H1 (cell line): ENCODE measurements at regions of chr12 and their contacts with region 1.

Region 1: DNA sequence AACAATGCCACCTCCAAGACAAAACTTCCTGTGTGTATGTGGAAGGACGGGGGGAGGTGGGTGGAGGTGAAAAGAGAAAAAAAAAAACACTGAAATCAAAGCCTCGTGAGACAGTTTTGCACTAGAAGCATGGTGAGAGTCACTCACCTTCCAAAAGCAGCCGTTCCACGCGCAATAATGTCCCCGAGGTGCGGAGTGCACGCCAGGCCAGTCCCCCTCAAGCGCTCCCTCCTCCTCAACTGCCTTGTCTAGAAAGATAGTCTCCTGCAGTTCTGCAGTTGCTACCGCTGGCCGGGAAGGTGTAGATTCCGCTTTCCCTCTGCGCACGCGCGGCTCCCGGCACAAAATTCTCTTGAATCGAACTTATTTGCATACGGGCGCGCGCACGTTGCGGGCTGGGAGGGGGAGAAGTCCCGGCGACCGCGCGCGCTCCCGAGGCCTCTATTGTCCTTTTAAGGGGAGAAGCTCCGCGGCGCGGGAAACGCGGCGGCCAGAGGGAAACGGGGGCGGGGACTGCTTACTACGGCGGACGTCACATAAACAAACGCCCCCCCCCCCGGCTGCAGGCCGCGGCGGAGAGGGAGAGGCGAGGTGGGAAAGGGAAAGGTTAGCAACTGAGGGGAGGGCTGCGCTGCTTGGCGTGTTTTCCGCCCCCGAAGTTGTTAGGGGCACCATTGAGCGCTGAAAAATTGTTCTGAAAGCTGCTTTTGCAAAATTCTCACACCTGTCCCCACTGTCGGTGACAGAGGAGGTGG is at the start of gene SINHCAF:
- DNase-seq: peak; percentile 99
- H3K4me3 ChIP-seq: peak within 1 kb of the TSS; percentile 95 to 99 (median 99)
- H3K27ac ChIP-seq: peak within 1 kb of the TSS; percentile 94
- H3K4me1 ChIP-seq: peaks cover 1 to 12% (median 3%) of the 10 kb centered on the region in 4 experiments; a peak in 5 of 7 replicates
- H3K27me3 ChIP-seq: no peaks in the 10 kb centered on the region
- CTCF ChIP-seq: no peak
- EP300 ChIP-seq: peak in 1 of 2 experiments; percentile 24; a peak in 1 of 3 replicates
- POLR2A ChIP-seq: peak; percentile 96 to 99
- RAD21 ChIP-seq: no peak
- total RNA-seq, gene SINHCAF: 536 and 576 TPM in 2 replicates

Region 2: DNA sequence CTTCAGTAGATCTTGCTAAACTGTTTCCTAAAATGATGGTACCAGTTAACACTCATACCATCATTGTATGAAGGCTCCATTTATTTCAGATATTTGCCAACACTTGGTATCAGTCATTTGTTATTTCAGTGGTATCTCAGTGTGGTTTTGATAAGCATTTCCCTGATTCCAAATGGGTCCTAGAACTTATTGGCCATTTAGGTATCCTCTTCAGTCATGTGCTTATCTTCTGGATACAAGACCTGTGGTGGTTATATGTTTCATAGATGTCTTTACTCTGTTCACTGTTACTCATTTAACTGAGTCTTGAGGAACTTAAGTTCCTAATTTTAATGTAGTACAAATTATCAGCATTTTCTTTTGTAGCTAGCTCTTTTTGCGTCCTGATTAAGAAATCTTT is 13.6 kb before region 1 on chr12:
- CTCF ChIA-PET with region 1: no interaction called
- POLR2A ChIA-PET with region 1: interaction called, 22 read pairs
- DNase-seq: no peak
- H3K4me3 ChIP-seq: no peak overlapping the region
- H3K27ac ChIP-seq: no peak overlapping the region
- H3K4me1 ChIP-seq: peaks cover 4 to 16% (median 9%) of the 10 kb centered on the region in 4 experiments
- H3K27me3 ChIP-seq: no peaks in the 10 kb centered on the region
- CTCF ChIP-seq: no peak
- EP300 ChIP-seq: no peak
- POLR2A ChIP-seq: no peak
- RAD21 ChIP-seq: no peak

Region 3: DNA sequence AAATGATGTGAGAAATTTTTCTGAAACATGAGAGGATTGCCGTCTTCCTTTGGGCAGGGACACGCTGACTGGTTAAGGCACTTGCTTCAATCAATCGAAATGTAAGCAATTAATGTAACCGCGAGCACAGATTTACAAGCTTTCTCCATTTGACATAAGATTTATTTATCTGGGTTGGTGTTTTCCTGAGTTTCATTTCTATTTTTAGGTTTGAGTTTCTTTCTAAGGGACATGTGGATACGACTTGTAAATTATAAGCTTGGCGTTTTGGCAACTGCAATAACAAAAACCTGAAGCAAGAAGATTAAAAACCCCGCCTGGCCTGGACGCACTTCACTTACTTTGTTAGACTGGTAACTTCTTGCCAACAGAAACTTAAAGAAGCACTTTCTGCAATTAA is 20.2 kb after region 1 on chr12:
- CTCF ChIA-PET with region 1: interaction called, 4 read pairs
- POLR2A ChIA-PET with region 1: interaction called, 22 read pairs
- DNase-seq: no peak
- H3K4me3 ChIP-seq: no peak overlapping the region
- H3K27ac ChIP-seq: no peak overlapping the region
- H3K4me1 ChIP-seq: peaks cover 0 to 9% (median 2%) of the 10 kb centered on the region in 4 experiments; a peak in 4 of 7 replicates
- H3K27me3 ChIP-seq: no peaks in the 10 kb centered on the region
- CTCF ChIP-seq: no peak
- EP300 ChIP-seq: no peak
- POLR2A ChIP-seq: no peak
- RAD21 ChIP-seq: no peak

Region 4: DNA sequence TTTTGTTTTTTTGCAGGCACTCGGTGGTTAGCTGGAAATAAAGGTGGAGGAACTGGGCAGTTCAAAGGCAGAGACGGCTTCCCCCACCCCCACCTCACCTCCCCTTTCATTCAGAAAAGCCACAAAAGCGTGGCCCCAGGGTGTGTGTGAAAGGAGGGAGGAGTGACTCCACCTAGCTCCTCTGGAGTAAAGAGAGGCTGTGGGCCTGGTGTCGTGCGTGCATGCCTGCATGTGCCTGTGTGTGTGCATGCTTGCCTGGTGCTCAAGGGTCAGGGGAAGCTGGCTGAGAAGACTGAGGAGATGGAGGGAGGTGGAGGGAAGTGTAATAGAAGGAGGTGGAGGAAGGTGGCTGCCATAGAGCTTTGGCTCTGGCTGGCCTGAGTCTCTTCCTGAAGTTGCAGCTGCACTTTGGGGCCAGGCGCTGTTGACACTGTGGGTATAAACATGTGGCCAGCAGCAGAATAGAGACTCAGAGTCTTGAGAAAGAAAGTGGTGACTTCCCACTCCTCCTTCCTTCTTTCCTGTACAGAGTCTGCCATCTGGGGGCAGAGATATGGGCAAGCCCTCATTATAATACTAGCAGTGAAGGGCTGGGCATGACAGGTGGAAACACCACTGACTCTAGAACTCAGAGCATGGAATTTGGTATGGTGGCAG is 36.8 kb after region 1 on chr12:
- CTCF ChIA-PET with region 1: interaction called, 4 read pairs
- POLR2A ChIA-PET with region 1: interaction called, 66 read pairs
- DNase-seq: peak in 1 of 2 experiments; percentile 58
- H3K4me3 ChIP-seq: peak overlapping the region in 1 of 4 experiments; percentile 33; a peak in 2 of 8 replicates
- H3K27ac ChIP-seq: peak overlapping the region; percentile 85
- H3K4me1 ChIP-seq: peaks cover 13 to 21% (median 21%) of the 10 kb centered on the region in 4 experiments
- H3K27me3 ChIP-seq: no peaks in the 10 kb centered on the region
- CTCF ChIP-seq: no peak
- EP300 ChIP-seq: no peak
- POLR2A ChIP-seq: no peak
- RAD21 ChIP-seq: peak in 1 of 2 experiments; percentile 25; a peak in 1 of 4 replicates

Region 5: DNA sequence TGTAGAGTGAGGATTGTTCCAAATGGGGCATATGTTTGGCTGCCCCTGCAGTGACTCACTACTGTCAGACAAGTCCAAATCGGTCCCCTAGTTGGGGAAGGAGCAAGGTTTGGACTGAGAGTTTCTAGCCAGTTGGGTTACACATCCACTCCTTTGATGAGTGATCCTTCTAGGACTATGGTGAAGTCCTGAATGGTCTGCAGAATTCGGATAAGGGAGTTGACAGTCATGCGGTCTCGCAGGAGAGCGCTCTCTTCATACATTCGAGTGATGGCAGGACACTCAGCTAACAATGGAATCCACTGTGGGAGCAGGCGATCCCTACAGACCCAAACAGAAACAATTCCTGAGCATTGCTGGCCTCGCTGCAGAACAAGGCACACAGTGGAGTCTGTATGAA is 61.4 kb after region 1 on chr12:
- CTCF ChIA-PET with region 1: interaction called, 10 read pairs
- POLR2A ChIA-PET with region 1: interaction called, 85 read pairs
- DNase-seq: peak in 1 of 2 experiments; percentile 53
- H3K4me3 ChIP-seq: peak overlapping the region in 1 of 4 experiments; percentile 59; a peak in 1 of 8 replicates
- H3K27ac ChIP-seq: peak overlapping the region; percentile 94
- H3K4me1 ChIP-seq: peaks cover 8 to 25% (median 21%) of the 10 kb centered on the region in 4 experiments; a peak in 6 of 7 replicates
- H3K27me3 ChIP-seq: no peaks in the 10 kb centered on the region
- CTCF ChIP-seq: no peak
- EP300 ChIP-seq: no peak
- POLR2A ChIP-seq: no peak
- RAD21 ChIP-seq: no peak